ENCODE measurements at regions of chr16 and their contacts with region 1.

Region 1: GRCh38 chr16:28491970-28492474 is at the start of gene CLN3:
- DNase-seq: peak; percentile 91
- H3K4me3 ChIP-seq: peak within 1 kb of the TSS; percentile 66 to 78 (median 78)
- H3K27ac ChIP-seq: peak within 1 kb of the TSS; percentile 95
- H3K4me1 ChIP-seq: peaks cover 7% of the 10 kb centered on the region
- H3K27me3 ChIP-seq: no peaks in the 10 kb centered on the region
- CTCF ChIP-seq: no peak
- total RNA-seq, gene CLN3: 14.2 to 23.2 TPM

Region 2: DNA sequence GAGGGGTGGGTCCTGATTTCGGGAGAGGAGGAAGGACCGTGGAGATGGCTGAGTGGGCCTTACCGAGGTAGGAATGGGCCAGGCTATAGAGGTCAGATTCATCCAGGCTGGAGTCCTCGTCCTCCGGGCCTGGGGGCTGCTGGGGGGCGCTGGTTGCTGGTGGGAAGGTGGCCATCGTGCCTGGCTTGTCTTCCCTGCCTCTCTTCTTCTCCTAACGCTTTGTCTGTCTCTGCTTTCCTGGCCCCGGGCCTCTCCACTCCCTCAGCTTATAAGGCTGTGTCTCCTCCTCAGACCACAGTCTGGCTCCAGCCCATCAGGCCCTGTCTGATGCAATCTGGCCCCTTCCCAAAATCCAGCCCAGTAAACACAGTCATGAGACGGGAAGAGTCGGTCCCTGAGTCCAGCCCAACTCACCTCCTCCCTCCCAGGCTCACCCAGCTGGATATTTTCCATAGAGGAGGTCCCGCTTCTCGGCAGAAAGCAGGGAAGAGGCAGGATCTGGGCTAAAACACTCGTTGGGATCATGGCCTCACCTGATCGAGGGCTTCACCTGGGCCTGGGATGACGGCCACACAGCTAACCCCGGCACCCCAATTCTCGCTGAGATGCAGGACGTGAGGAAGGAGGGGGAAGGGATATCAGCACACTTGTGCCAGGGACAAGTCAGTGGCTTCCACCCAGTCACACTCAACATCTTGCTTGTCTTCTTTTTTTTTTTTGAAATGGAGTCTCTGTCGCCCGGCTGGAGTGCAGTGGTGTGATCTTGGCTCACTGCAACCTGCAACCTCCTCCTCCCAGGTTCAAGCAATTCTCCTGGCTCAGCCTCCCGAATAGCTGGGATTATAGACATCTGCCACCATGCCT is 46.9 kb after region 1 on chr16 and contains the start of gene NUPR1:
- CTCF ChIA-PET with region 1: no interaction called
- dilution Hi-C with region 1: loop called (anchors 5 kb)
- in situ Hi-C with region 1: loop called in 1 of 2 experiments (anchors 10 kb)
- intact Hi-C with region 1: loop called (anchors 5 kb)
- DNase-seq: peak; percentile 87
- H3K4me3 ChIP-seq: peak within 1 kb of the TSS; percentile 60 to 77 (median 60)
- H3K27ac ChIP-seq: peak within 1 kb of the TSS; percentile 65
- H3K4me1 ChIP-seq: peaks cover 18% of the 10 kb centered on the region
- H3K27me3 ChIP-seq: no peaks in the 10 kb centered on the region
- CTCF ChIP-seq: no peak
- total RNA-seq, gene NUPR1: 55.0 to 160 TPM

Region 3: GRCh38 chr16:28609631-28610594 is 117.9 kb after region 1 on chr16 and contains the start of gene SULT1A1:
- CTCF ChIA-PET with region 1: no interaction called
- dilution Hi-C with region 1: no loop called
- in situ Hi-C with region 1: no loop called
- intact Hi-C with region 1: loop called (anchors 10 kb)
- DNase-seq: peak; percentile 37
- H3K4me3 ChIP-seq: no peak within 1 kb of the TSS
- H3K27ac ChIP-seq: no peak within 1 kb of the TSS
- H3K4me1 ChIP-seq: no peaks in the 10 kb centered on the region
- H3K27me3 ChIP-seq: no peaks in the 10 kb centered on the region
- CTCF ChIP-seq: no peak
- total RNA-seq, gene SULT1A1: 5.7 to 6.6 TPM